Endothelial cell of umbilical vein (primary cell): ENCODE measurements at regions of chr5 and their contacts with region 1.

Region 1: DNA sequence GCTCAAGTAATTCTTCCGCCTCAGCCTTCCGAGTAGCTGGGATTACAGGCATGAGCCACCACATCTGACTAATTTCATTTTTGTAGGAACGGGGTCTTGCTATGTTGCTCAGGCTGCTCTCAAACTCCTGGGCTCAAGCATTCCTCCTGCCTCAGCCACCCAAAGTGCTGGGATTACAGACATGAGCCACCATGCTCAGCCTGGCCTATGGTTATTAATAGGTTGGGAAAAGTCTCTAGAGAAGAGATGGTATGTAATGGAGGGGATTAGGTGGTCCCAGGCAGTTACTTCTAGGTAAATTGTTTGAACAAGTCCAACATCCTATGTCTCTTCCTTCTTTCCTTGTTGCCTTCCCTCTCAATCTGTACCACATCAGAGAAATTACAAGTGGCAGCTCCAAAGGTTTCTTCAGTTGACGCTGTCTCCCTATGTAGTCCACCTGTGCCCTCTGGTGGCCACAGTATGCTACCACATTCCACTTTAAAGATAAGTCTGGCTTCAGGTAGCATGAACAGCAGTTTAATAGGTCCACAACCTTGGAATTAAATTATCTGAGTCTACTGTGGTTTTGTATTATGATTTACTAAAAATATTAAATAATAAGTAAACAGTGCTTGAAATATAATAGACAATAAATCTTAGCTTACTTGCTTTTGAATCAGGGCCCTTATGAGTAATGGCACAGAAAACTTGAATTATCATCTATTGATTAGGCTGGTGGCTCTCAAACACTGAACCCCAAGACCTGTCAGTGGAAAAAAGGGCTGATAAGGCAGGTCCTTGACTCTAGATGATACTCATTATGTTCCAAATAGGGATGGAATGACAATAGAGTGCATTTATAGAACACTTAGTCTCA is 9.7 kb downstream of the TIGD6 start:
- DNase-seq: peak; percentile 79
- H3K4me3 ChIP-seq: no peak overlapping the region
- H3K27ac ChIP-seq: no peak overlapping the region
- H3K4me1 ChIP-seq: no peaks in the 10 kb centered on the region
- H3K27me3 ChIP-seq: no peaks in the 10 kb centered on the region
- CTCF ChIP-seq: peak; percentile 78 to 83
- POLR2A ChIP-seq: no peak

Region 2: GRCh38 chr5:149667084-149667828 is 323.5 kb before region 1 on chr5:
- CTCF ChIA-PET with region 1: interaction called, 16 read pairs
- POLR2A ChIA-PET with region 1: no interaction called
- dilution Hi-C with region 1: no loop called
- intact Hi-C with region 1: loop called (anchors 10 kb)
- DNase-seq: peak; percentile 42
- H3K4me3 ChIP-seq: no peak overlapping the region
- H3K27ac ChIP-seq: no peak overlapping the region
- H3K4me1 ChIP-seq: no peaks in the 10 kb centered on the region
- H3K27me3 ChIP-seq: peaks cover 3 to 4% of the 10 kb centered on the region in 2 experiments
- CTCF ChIP-seq: peak; percentile 78 to 89
- POLR2A ChIP-seq: no peak

Region 3: DNA sequence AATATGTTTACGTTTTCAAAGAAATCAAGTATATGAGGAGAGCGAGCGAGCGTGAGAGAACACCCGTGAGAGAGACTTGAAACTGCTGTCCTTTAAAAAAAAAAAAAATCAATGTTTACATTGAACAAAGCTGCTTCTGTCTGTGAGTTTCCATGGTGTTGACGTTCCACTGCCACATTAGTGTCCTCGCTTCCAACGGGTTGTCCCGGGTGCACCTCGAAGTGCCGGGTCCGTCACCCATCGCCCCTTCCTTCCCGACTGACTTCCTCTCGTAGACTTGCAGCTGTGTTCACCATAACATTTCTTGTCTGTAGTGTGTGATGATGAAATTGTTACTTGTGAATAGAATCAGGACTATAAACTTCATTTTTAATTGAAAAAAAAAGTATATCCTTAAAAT is 143.1 kb before region 1 on chr5:
- CTCF ChIA-PET with region 1: interaction called, 639 read pairs
- POLR2A ChIA-PET with region 1: no interaction called
- dilution Hi-C with region 1: no loop called
- intact Hi-C with region 1: no loop called
- DNase-seq: no peak
- H3K4me3 ChIP-seq: no peak overlapping the region
- H3K27ac ChIP-seq: no peak overlapping the region
- H3K4me1 ChIP-seq: no peaks in the 10 kb centered on the region
- H3K27me3 ChIP-seq: no peaks in the 10 kb centered on the region
- CTCF ChIP-seq: no peak
- POLR2A ChIP-seq: no peak

Region 4: GRCh38 chr5:149902177-149902576 is 88.6 kb before region 1 on chr5:
- CTCF ChIA-PET with region 1: interaction called, 17 read pairs
- POLR2A ChIA-PET with region 1: no interaction called
- dilution Hi-C with region 1: no loop called
- intact Hi-C with region 1: no loop called
- DNase-seq: peak; percentile 19
- H3K4me3 ChIP-seq: no peak overlapping the region
- H3K27ac ChIP-seq: no peak overlapping the region
- H3K4me1 ChIP-seq: peaks cover 9% of the 10 kb centered on the region
- H3K27me3 ChIP-seq: no peaks in the 10 kb centered on the region
- CTCF ChIP-seq: peak in 1 of 2 donors; percentile 27
- POLR2A ChIP-seq: no peak

Region 5: DNA sequence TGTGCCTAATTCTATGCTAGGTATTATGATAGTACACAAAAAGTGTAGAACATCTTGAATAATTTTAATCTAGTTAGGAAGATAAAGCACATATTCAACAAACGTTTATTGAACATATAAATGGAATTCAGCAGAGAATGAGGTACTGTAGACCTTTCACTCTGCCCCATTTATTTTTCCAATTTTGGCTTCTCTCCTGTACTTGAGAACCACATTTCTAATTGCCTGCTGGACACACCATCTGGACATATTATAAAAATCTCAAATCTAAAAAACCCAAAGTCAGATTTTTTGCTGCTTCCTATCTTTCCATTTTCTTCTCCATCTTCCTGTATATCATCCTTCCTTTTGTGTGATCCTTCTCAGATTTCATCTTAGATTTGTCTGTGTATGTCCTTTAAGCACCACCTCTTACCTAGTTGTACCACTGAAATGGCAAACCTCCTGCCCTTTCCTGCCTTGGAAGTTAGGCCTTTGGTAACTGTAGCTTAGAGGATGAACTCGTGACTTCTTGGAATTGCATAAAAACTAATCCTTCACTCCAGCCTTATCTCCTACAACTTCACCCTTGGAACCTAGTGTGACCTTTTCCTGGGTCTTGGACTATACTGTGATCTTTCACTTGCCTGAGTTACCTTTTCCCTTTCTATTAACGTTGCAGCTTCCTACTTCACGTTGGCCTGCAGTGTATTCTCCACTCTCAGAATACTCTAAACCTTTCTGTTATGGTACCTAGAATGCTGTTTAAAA is 21.4 kb before region 1 on chr5:
- CTCF ChIA-PET with region 1: interaction called, 149 read pairs
- POLR2A ChIA-PET with region 1: no interaction called
- dilution Hi-C with region 1: no loop called
- intact Hi-C with region 1: no loop called
- DNase-seq: no peak
- H3K4me3 ChIP-seq: no peak overlapping the region
- H3K27ac ChIP-seq: no peak overlapping the region
- H3K4me1 ChIP-seq: no peaks in the 10 kb centered on the region
- H3K27me3 ChIP-seq: no peaks in the 10 kb centered on the region
- CTCF ChIP-seq: no peak
- POLR2A ChIP-seq: no peak

Region 6: DNA sequence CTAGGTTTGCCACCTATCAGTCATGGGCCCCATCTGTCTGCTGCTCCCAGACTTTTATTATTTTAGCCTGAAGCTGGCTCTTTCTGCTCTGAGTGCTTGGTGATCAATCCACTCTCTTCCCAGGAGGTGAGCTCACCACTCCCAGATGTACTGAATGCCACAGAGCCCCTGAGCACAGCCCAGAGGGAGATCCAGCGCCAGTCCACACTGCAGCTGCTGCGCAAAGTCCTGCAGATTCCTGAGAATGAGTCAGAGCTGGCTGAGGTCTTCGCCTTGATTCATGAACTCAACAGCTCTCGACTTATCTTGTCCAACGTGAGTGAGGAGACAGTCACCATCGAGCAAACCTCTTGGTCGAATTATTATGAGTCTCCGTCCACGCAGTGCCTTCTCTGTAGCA is 45.8 kb after region 1 on chr5:
- CTCF ChIA-PET with region 1: interaction called, 10 read pairs
- POLR2A ChIA-PET with region 1: no interaction called
- dilution Hi-C with region 1: no loop called
- intact Hi-C with region 1: no loop called
- DNase-seq: no peak
- H3K4me3 ChIP-seq: no peak overlapping the region
- H3K27ac ChIP-seq: no peak overlapping the region
- H3K4me1 ChIP-seq: no peaks in the 10 kb centered on the region
- H3K27me3 ChIP-seq: no peaks in the 10 kb centered on the region
- CTCF ChIP-seq: no peak
- POLR2A ChIP-seq: no peak